Common myeloid progenitor, CD34-positive (primary cell): ENCODE measurements at regions of chr7 and their contacts with region 1.

Region 1: GRCh38 chr7:143008007-143008901 is 18.7 kb downstream of the OR9A2 start:
- DNase-seq: peak; percentile 72 to 85 (median 79)
- H3K4me3 ChIP-seq: no peak overlapping the region
- H3K27ac ChIP-seq: no peak overlapping the region
- H3K4me1 ChIP-seq: peaks cover 0 to 14% (median 3%) of the 10 kb centered on the region in 4 experiments
- H3K27me3 ChIP-seq: no peaks in the 10 kb centered on the region

Region 2: DNA sequence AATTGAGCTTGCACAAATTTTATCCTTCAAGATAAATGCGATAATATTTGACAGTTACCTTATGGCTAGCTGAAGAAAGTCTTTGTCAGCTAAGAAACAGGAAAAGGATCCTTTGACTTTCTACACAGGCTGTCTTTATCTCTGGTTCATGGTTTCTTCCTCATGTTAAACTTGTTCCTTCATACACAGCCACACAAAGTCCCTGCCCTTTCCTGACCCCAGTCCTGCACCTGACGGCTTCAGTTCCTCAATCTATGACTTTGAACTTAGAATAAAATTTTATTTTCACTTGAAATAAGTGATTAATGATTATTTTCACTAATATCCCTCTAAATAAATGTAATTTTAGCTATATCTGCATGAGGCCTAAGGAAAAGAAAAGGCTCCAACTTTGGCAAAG is 336.7 kb before region 1 on chr7:
- CTCF ChIA-PET with region 1: no interaction called
- POLR2A ChIA-PET with region 1: no interaction called
- DNase-seq: peak in 2 of 3 donors; percentile 67 to 81
- H3K4me3 ChIP-seq: no peak overlapping the region
- H3K27ac ChIP-seq: peak overlapping the region in 1 of 2 experiments; percentile 32
- H3K4me1 ChIP-seq: peaks cover 17 to 43% (median 34%) of the 10 kb centered on the region in 4 experiments
- H3K27me3 ChIP-seq: no peaks in the 10 kb centered on the region

Region 3: DNA sequence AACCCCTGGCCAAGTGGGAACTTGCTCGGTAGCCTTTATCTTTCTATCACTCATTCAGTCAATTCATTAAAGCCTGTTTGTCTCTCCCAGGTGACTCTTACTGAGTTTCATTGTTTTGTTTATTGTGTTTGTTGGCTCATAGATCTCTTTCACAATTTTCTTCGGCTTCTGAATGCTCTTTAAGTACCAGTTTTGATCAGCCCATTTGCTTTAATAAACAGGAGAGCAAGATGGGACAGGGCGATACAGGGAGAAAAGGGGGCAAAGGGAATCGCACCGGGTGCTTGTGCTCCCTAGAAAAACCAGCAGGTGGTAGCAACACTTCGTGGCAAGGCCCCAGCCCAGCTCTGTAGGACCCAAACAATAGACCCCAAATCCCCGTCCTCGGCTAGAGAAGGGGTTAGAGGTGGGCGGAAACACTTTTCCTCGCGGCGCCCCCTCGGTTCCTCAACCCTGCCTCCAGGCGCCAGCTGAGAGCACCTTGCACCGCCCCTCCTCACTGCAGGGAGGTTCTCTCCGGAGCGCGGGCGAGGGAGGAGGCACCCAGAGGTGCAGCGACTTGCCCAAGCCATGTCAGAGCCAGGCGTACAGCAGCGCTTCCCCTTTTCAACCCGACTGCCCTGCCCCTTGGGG is 154.4 kb before region 1 on chr7:
- CTCF ChIA-PET with region 1: interaction called, 12 read pairs
- POLR2A ChIA-PET with region 1: no interaction called
- DNase-seq: peak; percentile 84 to 94 (median 90)
- H3K4me3 ChIP-seq: peak overlapping the region; percentile 77 to 96 (median 84)
- H3K27ac ChIP-seq: no peak overlapping the region
- H3K4me1 ChIP-seq: peaks cover 5 to 31% (median 18%) of the 10 kb centered on the region in 4 experiments
- H3K27me3 ChIP-seq: no peaks in the 10 kb centered on the region

Region 4: DNA sequence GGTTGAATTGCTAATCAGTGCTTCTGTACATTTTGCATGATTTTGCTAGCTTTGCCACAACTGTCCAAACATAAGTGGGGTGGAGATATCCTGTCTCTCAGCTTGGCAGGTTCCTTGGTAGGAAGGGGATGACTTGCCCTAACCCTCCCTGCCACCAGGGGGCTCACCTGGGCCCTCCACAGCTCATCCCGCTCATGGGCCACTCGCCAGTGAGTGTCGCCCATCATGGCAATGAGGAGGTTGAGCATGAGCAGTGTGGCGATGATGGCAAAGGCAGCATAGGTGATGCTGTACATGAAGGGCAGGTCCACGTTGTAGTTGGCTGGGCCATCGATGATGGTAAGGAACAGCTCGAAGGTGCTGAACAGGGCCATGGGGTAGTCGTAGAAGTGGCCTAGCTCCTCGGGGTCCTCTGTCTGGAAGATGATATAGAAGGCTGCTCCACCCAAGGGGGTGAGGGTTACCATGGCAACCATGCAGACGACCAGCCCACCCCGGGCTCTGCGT is 134.9 kb before region 1 on chr7:
- CTCF ChIA-PET with region 1: interaction called, 59 read pairs
- POLR2A ChIA-PET with region 1: no interaction called
- DNase-seq: peak in 1 of 3 donors; percentile 27
- H3K4me3 ChIP-seq: no peak overlapping the region
- H3K27ac ChIP-seq: no peak overlapping the region
- H3K4me1 ChIP-seq: no peaks in the 10 kb centered on the region
- H3K27me3 ChIP-seq: no peaks in the 10 kb centered on the region

Region 5: DNA sequence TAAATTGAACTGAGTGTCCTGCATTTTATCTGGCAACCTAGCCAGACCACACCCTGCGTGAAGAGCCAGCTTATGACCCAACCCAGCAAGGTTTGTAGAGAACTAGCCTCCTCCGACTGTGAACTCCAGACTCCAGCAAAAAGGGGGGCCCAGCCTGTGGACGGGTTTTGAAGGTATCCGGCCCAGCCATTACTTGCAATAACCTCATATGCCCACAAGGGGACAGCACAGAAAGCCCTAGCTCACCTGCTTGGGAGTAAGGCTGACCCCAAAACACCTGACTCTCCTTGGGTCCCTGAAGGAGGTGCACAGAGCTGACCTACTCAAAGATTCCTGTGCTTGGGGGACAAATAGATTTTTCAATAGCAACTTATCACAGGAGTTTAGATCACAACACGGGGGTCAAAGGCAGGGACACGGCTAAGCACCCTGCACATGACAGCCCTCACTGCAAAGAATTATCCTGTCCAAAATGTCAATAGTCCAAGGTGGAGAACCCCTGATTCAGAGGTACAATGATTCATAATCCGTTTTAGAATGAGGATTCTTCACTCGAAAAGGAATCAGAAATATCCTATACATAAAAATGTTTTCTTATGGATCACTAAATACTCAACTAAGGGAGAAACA is 127.3 kb before region 1 on chr7:
- CTCF ChIA-PET with region 1: interaction called, 59 read pairs
- POLR2A ChIA-PET with region 1: no interaction called
- DNase-seq: peak; percentile 34 to 70 (median 61)
- H3K4me3 ChIP-seq: no peak overlapping the region
- H3K27ac ChIP-seq: no peak overlapping the region
- H3K4me1 ChIP-seq: no peaks in the 10 kb centered on the region
- H3K27me3 ChIP-seq: peaks cover 0 to 6% (median 0%) of the 10 kb centered on the region in 5 experiments

Region 6: GRCh38 chr7:142939226-142939910 is 68.9 kb before region 1 on chr7 and contains the start of gene LLCFC1:
- CTCF ChIA-PET with region 1: no interaction called
- POLR2A ChIA-PET with region 1: no interaction called
- DNase-seq: no peak
- H3K4me3 ChIP-seq: no peak within 1 kb of the TSS
- H3K27ac ChIP-seq: no peak within 1 kb of the TSS
- H3K4me1 ChIP-seq: no peaks in the 10 kb centered on the region
- H3K27me3 ChIP-seq: peaks cover 0 to 2% (median 0%) of the 10 kb centered on the region in 5 experiments

Region 7: DNA sequence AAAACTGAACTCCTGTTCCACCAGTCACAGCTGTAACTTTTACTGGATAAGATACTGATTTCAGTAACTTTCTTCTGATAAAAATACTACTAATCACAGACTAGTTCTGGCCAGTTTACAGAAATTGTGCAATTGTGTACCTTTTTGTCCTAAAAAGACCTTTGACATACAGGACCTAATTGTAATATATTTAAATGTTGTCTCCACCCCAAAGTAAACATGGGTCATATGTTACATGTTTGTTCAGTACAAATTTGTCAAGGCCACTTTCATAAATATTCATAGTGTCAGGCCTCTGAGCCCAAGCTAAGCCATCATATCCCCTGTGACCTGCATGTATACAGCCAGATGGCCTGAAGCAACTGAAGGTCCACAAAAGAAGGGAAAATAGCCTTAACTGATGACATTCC is 96.6 kb after region 1 on chr7:
- CTCF ChIA-PET with region 1: no interaction called
- POLR2A ChIA-PET with region 1: no interaction called
- DNase-seq: no peak
- H3K4me3 ChIP-seq: no peak overlapping the region
- H3K27ac ChIP-seq: no peak overlapping the region
- H3K4me1 ChIP-seq: no peaks in the 10 kb centered on the region
- H3K27me3 ChIP-seq: no peaks in the 10 kb centered on the region

Region 8: DNA sequence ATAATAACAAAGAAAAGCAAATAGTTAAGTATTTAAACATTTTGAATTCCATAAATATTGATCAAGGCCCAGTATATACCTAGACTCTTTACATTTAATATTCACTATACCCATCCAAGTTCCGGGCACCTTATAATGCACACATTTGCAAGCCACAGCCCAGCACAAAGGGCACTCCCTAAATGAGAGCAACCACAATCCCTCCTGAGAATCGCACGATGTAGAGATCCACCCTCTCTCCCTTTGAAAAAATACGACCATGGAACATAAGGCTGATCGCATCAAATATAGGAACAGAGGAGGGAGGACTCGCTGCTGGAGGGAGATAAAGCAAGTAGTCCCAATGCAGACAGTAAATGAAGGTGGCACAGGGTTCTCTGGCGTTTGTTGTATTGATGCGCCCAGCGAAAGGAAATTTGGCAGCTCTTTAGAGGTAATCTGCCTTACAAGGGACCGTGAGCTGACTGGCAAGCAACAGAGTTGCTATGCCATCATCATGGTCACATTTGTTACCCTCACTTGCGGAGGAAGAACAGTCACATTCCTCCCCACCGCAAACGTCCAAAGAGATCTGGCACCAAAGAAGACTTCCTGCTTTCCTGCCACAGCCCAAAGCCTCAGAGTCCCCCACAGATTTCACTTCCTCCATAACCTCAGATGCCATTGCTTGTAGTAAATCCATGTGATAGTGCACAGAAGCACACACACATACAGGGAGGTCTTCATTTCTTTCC is 197.5 kb after region 1 on chr7:
- CTCF ChIA-PET with region 1: interaction called, 19 read pairs
- POLR2A ChIA-PET with region 1: interaction called, 3 read pairs
- DNase-seq: peak; percentile 93 to 99 (median 98)
- H3K4me3 ChIP-seq: peak overlapping the region in 3 of 7 experiments; percentile 13 to 68 (median 42)
- H3K27ac ChIP-seq: no peak overlapping the region
- H3K4me1 ChIP-seq: peaks cover 4 to 25% (median 14%) of the 10 kb centered on the region in 4 experiments
- H3K27me3 ChIP-seq: peaks cover 0 to 47% (median 12%) of the 10 kb centered on the region in 5 experiments

Region 9: GRCh38 chr7:143214789-143215679 is 206.8 kb after region 1 on chr7:
- CTCF ChIA-PET with region 1: interaction called, 326 read pairs
- POLR2A ChIA-PET with region 1: no interaction called
- DNase-seq: peak; percentile 85 to 93 (median 87)
- H3K4me3 ChIP-seq: no peak overlapping the region
- H3K27ac ChIP-seq: no peak overlapping the region
- H3K4me1 ChIP-seq: no peaks in the 10 kb centered on the region
- H3K27me3 ChIP-seq: peaks cover 0 to under 1% (median 0%) of the 10 kb centered on the region in 5 experiments